Activated CD4-positive, alpha-beta T cell treated with anti-CD3 and anti-CD28 coated beads for 36 hours (primary cell): ENCODE measurements at regions of chr5 and their contacts with region 1.

Region 1: GRCh38 chr5:6827526-6828219 is 114.4 kb downstream of the TENT4A start:
- DNase-seq: peak; percentile 70
- ATAC-seq: peak; percentile 76
- H3K4me3 Mint-ChIP-seq: peak overlapping the region; percentile 60
- H3K27ac Mint-ChIP-seq: peak overlapping the region; percentile 86
- H3K4me1 Mint-ChIP-seq: peaks cover 49% of the 10 kb centered on the region
- H3K27me3 Mint-ChIP-seq: peaks cover 12% of the 10 kb centered on the region

Region 2: GRCh38 chr5:5523066-5523505 is 1304.6 kb before region 1 on chr5:
- CTCF ChIA-PET with region 1: no interaction called
- POLR2A ChIA-PET with region 1: no interaction called
- intact Hi-C with region 1: loop called in 1 of 2 experiments (anchors 5 kb)
- DNase-seq: peak; percentile 19
- ATAC-seq: peak; percentile 82
- H3K4me3 Mint-ChIP-seq: no peak overlapping the region
- H3K27ac Mint-ChIP-seq: peak overlapping the region; percentile 80
- H3K4me1 Mint-ChIP-seq: peaks cover 31% of the 10 kb centered on the region
- H3K27me3 Mint-ChIP-seq: no peaks in the 10 kb centered on the region

Region 3: GRCh38 chr5:6632917-6633468 is 194.7 kb before region 1 on chr5 and contains the starts of genes NSUN2 and SRD5A1:
- CTCF ChIA-PET with region 1: no interaction called
- POLR2A ChIA-PET with region 1: no interaction called
- intact Hi-C with region 1: loop called in 1 of 2 experiments (anchors 5 kb)
- DNase-seq: peak; percentile 96
- ATAC-seq: peak; percentile 89
- H3K4me3 Mint-ChIP-seq: peak within 1 kb of the TSS; percentile 99
- H3K27ac Mint-ChIP-seq: peak within 1 kb of the TSS; percentile 98
- H3K4me1 Mint-ChIP-seq: peaks cover 31% of the 10 kb centered on the region
- H3K27me3 Mint-ChIP-seq: no peaks in the 10 kb centered on the region
- total RNA-seq, gene NSUN2: 91.1 to 97.1 TPM
- total RNA-seq, gene SRD5A1: 7.6 to 11.1 TPM

Region 4: GRCh38 chr5:6765612-6766525 is 61.8 kb before region 1 on chr5:
- CTCF ChIA-PET with region 1: no interaction called
- POLR2A ChIA-PET with region 1: no interaction called
- intact Hi-C with region 1: loop called in 1 of 2 experiments (anchors 5 kb)
- DNase-seq: peak; percentile 88
- ATAC-seq: peak; percentile 86
- H3K4me3 Mint-ChIP-seq: no peak overlapping the region
- H3K27ac Mint-ChIP-seq: no peak overlapping the region
- H3K4me1 Mint-ChIP-seq: peaks cover 9% of the 10 kb centered on the region
- H3K27me3 Mint-ChIP-seq: no peaks in the 10 kb centered on the region

Region 5: DNA sequence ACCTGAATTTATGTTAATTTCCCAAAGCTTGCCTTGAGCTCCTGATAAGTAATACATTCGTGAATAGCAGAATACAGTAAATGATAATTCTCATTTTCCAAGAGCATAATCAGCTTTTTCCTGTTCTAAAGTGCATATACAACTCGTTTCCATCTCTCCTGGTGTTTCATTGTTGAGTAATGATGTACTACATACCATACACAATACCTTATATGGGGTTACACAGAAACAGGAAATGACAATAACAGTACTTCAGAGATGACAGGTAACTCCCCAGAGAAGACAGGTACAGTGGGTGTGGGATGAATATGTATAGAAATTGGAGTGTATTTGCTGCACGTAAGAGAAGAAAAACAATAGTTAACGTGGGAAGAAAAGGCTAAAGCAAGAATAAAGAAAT is 172.6 kb after region 1 on chr5:
- CTCF ChIA-PET with region 1: no interaction called
- POLR2A ChIA-PET with region 1: no interaction called
- intact Hi-C with region 1: loop called (anchors 1 to 2 kb)
- DNase-seq: no peak
- ATAC-seq: peak; percentile 95
- H3K4me3 Mint-ChIP-seq: no peak overlapping the region
- H3K27ac Mint-ChIP-seq: no peak overlapping the region
- H3K4me1 Mint-ChIP-seq: peaks cover 10% of the 10 kb centered on the region
- H3K27me3 Mint-ChIP-seq: peaks cover 33% of the 10 kb centered on the region

Region 6: DNA sequence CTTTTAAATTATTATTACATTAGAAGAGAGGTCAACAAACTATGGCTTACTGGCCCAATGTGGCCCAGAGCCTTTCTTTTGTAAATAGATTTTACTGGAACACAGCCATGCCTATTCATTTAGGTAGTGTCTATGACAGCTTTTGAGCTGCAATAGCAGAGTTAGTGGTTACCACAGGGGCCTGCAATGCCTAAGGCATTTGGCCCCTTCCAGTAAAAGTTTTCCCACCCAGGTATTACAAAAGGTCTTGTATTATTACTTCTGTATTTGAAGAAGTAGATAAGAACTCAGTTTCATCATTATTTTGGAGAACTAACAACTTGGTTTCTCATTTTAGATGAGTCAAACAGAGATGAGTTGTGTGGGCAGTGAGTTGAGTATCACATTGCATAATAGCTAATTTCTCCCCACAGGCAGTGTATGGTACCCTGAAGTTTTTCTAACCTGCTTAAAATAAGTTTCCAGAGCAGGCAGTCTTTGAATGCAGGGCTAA is 1050.8 kb after region 1 on chr5:
- CTCF ChIA-PET with region 1: no interaction called
- POLR2A ChIA-PET with region 1: no interaction called
- intact Hi-C with region 1: loop called in 1 of 2 experiments (anchors 1 kb)
- DNase-seq: peak; percentile 29
- ATAC-seq: peak; percentile 72
- H3K4me3 Mint-ChIP-seq: peak overlapping the region; percentile 6
- H3K27ac Mint-ChIP-seq: peak overlapping the region; percentile 83
- H3K4me1 Mint-ChIP-seq: peaks cover 55% of the 10 kb centered on the region
- H3K27me3 Mint-ChIP-seq: no peaks in the 10 kb centered on the region